ENCODE measurements at regions of chr13 and their contacts with region 1.

Region 1: GRCh38 chr13:45310341-45311125 is 30.4 kb downstream of the TPT1 start:
- DNase-seq: no peak
- ATAC-seq: no peak
- H3K4me3 ChIP-seq: peak overlapping the region; percentile 54
- H3K27ac ChIP-seq: no peak overlapping the region
- H3K4me1 ChIP-seq: peaks cover 10% of the 10 kb centered on the region
- H3K27me3 ChIP-seq: no peaks in the 10 kb centered on the region
- CTCF ChIP-seq: no peak

Region 2: GRCh38 chr13:45055198-45055901 is 255.2 kb before region 1 on chr13:
- intact Hi-C with region 1: loop called (anchors 10 kb)
- DNase-seq: no peak
- ATAC-seq: peak; percentile 58
- H3K4me3 ChIP-seq: no peak overlapping the region
- H3K27ac ChIP-seq: no peak overlapping the region
- H3K4me1 ChIP-seq: peaks cover 4% of the 10 kb centered on the region
- H3K27me3 ChIP-seq: no peaks in the 10 kb centered on the region
- CTCF ChIP-seq: no peak

Region 3: DNA sequence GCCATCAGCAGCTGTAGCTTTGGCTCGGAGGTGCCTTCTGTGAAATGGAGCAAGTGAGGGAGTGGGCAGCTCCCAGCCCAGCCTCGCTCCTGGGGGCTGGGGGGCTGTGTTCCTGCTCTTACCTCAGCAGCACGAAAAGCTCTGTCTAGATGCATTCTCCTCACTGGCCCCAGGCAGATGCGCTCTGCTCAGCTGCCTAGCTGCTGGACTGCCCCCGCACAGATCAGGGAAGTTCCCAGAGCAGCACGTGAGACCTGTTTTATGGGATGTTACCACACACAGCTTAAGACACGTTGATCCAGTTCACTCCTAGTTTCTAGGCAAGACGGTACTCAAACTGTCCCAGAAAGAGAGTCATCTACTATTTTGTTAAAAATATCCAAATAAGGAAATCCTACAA is 857.8 kb after region 1 on chr13:
- intact Hi-C with region 1: no loop called
- DNase-seq: peak; percentile 71
- ATAC-seq: peak; percentile 82
- H3K4me3 ChIP-seq: no peak overlapping the region
- H3K27ac ChIP-seq: no peak overlapping the region
- H3K4me1 ChIP-seq: peaks cover 46% of the 10 kb centered on the region
- H3K27me3 ChIP-seq: no peaks in the 10 kb centered on the region
- CTCF ChIP-seq: no peak